KBM-7 (cell line): ENCODE measurements at regions of chr5 and their contacts with region 1.

Region 1: DNA sequence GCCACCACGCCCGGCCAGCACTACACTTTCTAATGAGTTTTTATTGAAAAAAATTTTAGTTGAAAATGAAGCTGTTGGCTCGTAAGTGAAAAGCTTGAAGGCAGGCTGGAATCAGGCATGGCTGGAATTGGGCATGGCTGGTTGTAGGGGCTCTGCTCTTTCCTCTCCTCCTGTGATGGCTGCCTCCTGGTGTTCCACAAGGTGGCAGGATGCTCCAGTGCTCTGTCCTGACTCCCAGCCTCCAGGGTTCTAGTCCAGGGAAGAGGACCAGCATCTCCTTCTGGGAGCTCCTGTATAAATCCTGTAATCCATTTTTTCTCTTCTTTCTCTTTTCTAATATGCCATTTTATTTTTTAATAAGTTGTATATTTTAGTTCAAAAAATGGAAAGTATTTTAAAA is 57.2 kb upstream of the DHFR start:
- DNase-seq: peak; percentile 28

Region 2: GRCh38 chr5:80125962-80126480 is 585.9 kb before region 1 on chr5:
- in situ Hi-C with region 1: no loop called
- DNase-seq: peak; percentile 51

Region 3: GRCh38 chr5:80275347-80275746 is 436.6 kb before region 1 on chr5:
- in situ Hi-C with region 1: no loop called
- DNase-seq: peak; percentile 56

Region 4: DNA sequence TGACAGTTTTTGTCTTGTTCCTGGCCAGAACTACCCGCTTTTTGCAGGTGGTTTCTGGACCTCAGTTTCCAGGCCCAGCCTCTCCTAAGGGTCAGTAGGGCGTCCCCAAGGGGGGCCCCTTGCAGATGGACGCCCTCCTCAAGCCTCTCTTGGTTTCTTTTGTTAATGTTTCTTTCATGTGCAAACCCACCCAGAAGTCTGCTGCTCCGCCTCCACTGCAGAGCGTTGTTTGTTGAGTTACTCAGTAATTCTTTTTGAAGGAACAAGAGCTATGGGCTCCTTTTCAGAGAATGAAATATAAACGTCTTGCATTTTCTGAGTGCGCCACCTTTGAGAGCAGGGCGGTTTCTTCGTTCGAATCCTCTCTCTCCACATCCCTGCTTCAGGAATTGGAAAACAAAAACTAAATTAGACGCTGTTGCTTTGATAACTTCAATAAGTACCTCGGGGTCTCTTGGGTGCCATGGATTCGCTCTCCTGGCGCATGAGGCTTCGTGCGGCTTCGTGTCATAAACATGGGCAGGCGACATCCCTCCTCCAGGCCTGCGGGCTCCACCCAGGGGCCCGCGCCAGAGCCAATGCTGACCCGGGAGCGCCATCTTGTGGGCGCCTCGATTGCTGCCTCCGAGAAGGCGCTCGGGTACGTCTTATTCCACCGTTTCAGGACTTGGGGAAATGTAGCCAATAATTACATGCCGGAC is 482.8 kb after region 1 on chr5:
- in situ Hi-C with region 1: loop called (anchors 25 kb)
- DNase-seq: peak; percentile 91